Adrenal gland (tissue), 19 donors: ENCODE measurements at regions of chr6 and their contacts with region 1.

Region 1: DNA sequence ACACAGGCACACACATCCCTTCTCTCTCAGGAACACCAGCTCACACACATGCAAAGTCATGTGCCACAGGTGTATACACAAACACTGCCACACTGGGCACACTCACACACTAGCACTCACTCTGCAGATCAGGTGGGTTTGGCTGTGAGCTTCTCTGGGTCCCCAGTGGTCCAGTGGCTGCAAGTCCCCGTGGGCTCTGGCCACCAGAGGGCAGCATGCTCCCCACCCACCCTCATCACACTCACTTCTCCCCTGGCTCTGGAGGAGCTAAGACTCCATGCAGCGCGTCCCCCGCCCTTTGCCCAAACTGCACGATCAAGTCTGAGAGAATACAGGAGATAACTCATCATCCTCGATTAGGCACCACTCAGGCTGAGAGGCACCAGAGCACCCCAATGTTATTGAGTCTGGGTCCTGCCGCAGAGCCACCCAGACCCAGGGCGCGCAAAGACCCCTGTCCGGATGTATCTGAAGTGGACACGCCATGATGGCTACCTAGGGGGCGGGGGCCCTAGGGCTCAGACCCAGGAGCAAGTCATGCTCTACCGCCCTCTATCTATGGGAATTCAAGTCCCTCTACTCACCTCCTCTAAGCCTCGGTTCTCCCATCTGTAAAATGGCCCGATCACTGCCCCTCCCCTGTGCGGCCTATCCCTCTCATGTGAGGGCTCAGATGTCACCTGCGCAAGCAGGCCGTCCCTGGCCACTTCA is 90.5 kb downstream of the GRM4 start:
- DNase-seq: peak; percentile 33 to 77 (median 63)
- H3K4me3 ChIP-seq: no peak overlapping the region
- H3K27ac ChIP-seq: no peak overlapping the region
- H3K4me1 ChIP-seq: no peaks in the 10 kb centered on the region
- H3K27me3 ChIP-seq: peaks cover 6% of the 10 kb centered on the region
- CTCF ChIP-seq: peak; percentile 43 to 73 (median 64)
- POLR2A ChIP-seq: no peak

Region 2: DNA sequence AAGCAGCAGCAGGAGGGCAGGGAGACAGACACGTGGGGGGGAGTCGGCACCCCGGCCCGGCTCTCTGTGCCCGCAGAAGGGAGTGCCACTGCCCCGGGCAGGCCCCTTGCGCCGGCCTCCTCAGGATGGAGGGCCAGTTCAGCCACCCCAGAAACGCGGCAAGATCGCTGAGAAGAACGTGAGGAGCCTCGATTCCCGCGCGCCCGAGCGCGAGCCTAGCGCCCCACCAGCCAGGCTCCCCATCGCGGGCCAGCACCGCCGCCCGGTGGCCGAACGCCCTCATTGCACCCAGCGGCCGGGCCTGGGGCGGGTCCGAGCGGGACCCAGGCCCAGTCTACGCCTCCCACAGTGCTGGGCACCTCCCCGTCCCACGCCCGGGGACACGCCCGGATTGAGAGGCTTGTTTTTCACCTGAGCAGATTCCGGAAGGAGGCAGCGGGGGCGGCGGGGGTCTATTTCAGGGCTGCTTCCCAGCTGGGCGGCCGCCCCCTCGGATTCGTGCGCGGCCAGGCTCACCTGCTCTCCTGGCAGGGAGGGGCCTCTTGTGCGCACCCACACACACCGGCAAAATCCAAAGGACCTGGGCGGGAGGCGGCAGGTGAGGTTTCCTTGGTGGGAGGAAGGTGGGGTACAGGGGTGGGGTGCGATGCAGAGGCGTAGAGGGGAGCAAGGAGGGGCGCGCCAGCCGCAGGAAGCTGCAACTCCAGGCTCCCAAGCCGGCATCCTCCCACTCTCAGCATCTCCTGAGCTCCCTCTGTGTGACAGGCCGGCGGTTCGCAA is 99.5 kb after region 1 on chr6:
- intact Hi-C with region 1: loop called (anchors 2 to 5 kb)
- DNase-seq: peak in 6 of 7 donors; percentile 35 to 58 (median 48)
- H3K4me3 ChIP-seq: peak overlapping the region in 1 of 4 donors; percentile 4
- H3K27ac ChIP-seq: no peak overlapping the region
- H3K4me1 ChIP-seq: peaks cover 0 to 5% of the 10 kb centered on the region in 2 donors
- H3K27me3 ChIP-seq: peaks cover 33% of the 10 kb centered on the region
- CTCF ChIP-seq: peak; percentile 80 to 98 (median 90)
- POLR2A ChIP-seq: no peak

Region 3: DNA sequence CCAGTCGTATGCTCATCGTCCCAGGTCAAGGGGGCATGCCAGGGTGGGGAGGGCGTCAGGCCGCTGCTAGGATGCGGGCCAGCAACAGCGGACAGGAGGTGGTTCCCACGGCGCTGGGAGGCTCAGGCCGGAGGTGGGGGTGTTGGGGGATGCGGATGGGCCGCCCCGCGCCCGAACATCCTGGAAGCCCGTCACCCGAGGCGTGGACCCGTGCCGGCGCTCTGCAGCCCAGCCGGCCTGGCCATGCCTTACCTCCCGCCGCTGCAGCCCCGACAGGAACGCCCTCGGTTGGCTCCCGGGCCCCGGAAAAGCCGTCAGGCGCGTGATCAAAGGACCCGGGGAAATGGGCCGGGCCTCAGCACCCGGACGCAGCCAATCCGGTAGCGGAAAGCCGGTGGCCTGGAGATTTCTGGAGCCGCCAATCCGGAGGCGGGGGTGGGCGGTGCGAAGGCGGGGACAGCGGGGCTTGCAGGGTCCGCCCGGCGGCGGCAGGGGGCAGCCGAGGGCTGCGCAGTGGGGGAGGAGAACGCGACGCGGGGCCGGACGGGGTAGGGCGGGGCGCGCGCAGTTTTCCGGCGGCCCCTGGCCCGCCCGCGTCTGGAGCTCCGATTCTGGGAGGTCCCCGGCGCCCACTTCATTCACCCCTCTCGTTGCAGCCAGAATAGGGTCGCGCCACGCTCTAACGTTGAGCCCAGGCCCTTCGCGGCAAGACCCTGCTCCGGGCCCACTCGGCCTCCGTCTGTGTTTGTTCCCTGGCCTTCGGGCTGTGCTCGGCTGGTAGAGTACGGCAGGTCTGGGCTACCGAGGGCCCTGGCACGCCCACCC is 193.6 kb after region 1 on chr6 and contains the start of gene SMIM29:
- intact Hi-C with region 1: no loop called
- DNase-seq: peak; percentile 97 to 98 (median 97)
- H3K4me3 ChIP-seq: peak within 1 kb of the TSS; percentile 22 to 83 (median 68)
- H3K27ac ChIP-seq: peak within 1 kb of the TSS; percentile 28 to 90 (median 83)
- H3K4me1 ChIP-seq: peaks cover 16 to 23% of the 10 kb centered on the region in 2 donors
- H3K27me3 ChIP-seq: no peaks in the 10 kb centered on the region
- CTCF ChIP-seq: peak; percentile 71 to 98 (median 90)
- POLR2A ChIP-seq: peak; percentile 60 to 87
- total RNA-seq, gene SMIM29: 21.4 to 53.7 (median 31.2) TPM